ENCODE measurements at regions of chr12 and their contacts with region 1.

Region 1: GRCh38 chr12:123983822-123984485 is 10.9 kb downstream of the ZNF664 start:
- DNase-seq: peak; percentile 75
- ATAC-seq: peak; percentile 86
- H3K4me3 ChIP-seq: no peak overlapping the region
- H3K27ac ChIP-seq: no peak overlapping the region
- H3K4me1 ChIP-seq: no peaks in the 10 kb centered on the region; the same call in 1 of the 2 replicates
- H3K27me3 ChIP-seq: no peaks in the 10 kb centered on the region
- CTCF ChIP-seq: peak; percentile 81
- POLR2A ChIP-seq: no peak
- RAD21 ChIP-seq: peak; percentile 89

Region 2: DNA sequence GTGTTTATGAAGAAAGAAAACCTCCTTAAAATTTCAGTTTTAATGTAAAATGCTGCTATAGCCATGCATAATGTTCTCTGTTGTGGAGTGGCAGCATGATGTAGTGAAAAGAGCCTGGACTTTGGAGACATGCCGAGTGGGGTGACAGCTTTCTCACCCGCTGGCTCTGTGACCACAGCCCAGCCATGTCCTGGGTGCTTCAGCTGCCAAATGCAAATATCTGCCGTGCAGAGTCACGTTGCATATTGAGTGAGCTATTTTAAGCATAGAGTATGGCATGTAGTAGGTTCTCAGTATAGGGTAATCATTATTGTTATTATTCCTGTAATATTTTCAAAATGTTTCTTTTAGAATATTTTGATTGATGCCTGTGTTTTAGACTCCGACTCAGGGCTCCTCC is 328.5 kb before region 1 on chr12:
- CTCF ChIA-PET with region 1: no interaction called
- POLR2A ChIA-PET with region 1: no interaction called
- dilution Hi-C with region 1: no loop called
- in situ Hi-C with region 1: no loop called
- intact Hi-C with region 1: loop called (anchors 10 kb)
- DNase-seq: no peak
- ATAC-seq: no peak
- H3K4me3 ChIP-seq: no peak overlapping the region
- H3K27ac ChIP-seq: no peak overlapping the region
- H3K4me1 ChIP-seq: peaks cover 3% of the 10 kb centered on the region
- H3K27me3 ChIP-seq: no peaks in the 10 kb centered on the region
- CTCF ChIP-seq: no peak
- POLR2A ChIP-seq: no peak
- RAD21 ChIP-seq: no peak

Region 3: GRCh38 chr12:123713398-123713797 is 270.6 kb before region 1 on chr12:
- CTCF ChIA-PET with region 1: interaction called, 3 read pairs
- POLR2A ChIA-PET with region 1: interaction called, 4 read pairs
- dilution Hi-C with region 1: no loop called
- in situ Hi-C with region 1: no loop called
- intact Hi-C with region 1: loop called (anchors 5 kb)
- DNase-seq: peak; percentile 10
- ATAC-seq: no peak
- H3K4me3 ChIP-seq: peak overlapping the region; percentile 93
- H3K27ac ChIP-seq: no peak overlapping the region
- H3K4me1 ChIP-seq: peaks cover 5% of the 10 kb centered on the region
- H3K27me3 ChIP-seq: no peaks in the 10 kb centered on the region
- CTCF ChIP-seq: no peak
- POLR2A ChIP-seq: no peak
- RAD21 ChIP-seq: no peak

Region 4: GRCh38 chr12:123801573-123802178 is 182.3 kb before region 1 on chr12:
- CTCF ChIA-PET with region 1: no interaction called
- POLR2A ChIA-PET with region 1: no interaction called
- dilution Hi-C with region 1: no loop called
- in situ Hi-C with region 1: loop called (anchors 5 kb)
- intact Hi-C with region 1: loop called (anchors 1 kb)
- DNase-seq: peak; percentile 53
- ATAC-seq: no peak; the same call in 1 of the 2 replicates
- H3K4me3 ChIP-seq: no peak overlapping the region
- H3K27ac ChIP-seq: no peak overlapping the region
- H3K4me1 ChIP-seq: no peaks in the 10 kb centered on the region
- H3K27me3 ChIP-seq: peaks cover 12% of the 10 kb centered on the region
- CTCF ChIP-seq: peak; percentile 65
- POLR2A ChIP-seq: no peak
- RAD21 ChIP-seq: peak; percentile 66

Region 5: GRCh38 chr12:123808167-123808566 is 175.8 kb before region 1 on chr12:
- CTCF ChIA-PET with region 1: no interaction called
- POLR2A ChIA-PET with region 1: no interaction called
- dilution Hi-C with region 1: no loop called
- in situ Hi-C with region 1: loop called (anchors 5 kb)
- intact Hi-C with region 1: no loop called
- DNase-seq: peak; percentile 7
- ATAC-seq: no peak
- H3K4me3 ChIP-seq: no peak overlapping the region
- H3K27ac ChIP-seq: no peak overlapping the region
- H3K4me1 ChIP-seq: no peaks in the 10 kb centered on the region
- H3K27me3 ChIP-seq: peaks cover 8% of the 10 kb centered on the region; the same call in 1 of the 2 replicates
- CTCF ChIP-seq: peak; percentile 35
- POLR2A ChIP-seq: no peak
- RAD21 ChIP-seq: peak; percentile 30; the same call in 1 of the 2 replicates

Region 6: GRCh38 chr12:123891516-123892179 is 92.3 kb before region 1 on chr12:
- CTCF ChIA-PET with region 1: no interaction called
- POLR2A ChIA-PET with region 1: no interaction called
- dilution Hi-C with region 1: no loop called
- in situ Hi-C with region 1: no loop called
- intact Hi-C with region 1: no loop called
- DNase-seq: no peak
- ATAC-seq: no peak
- H3K4me3 ChIP-seq: no peak overlapping the region
- H3K27ac ChIP-seq: no peak overlapping the region
- H3K4me1 ChIP-seq: no peaks in the 10 kb centered on the region
- H3K27me3 ChIP-seq: peaks cover 41% of the 10 kb centered on the region
- CTCF ChIP-seq: no peak
- POLR2A ChIP-seq: no peak
- RAD21 ChIP-seq: no peak

Region 7: DNA sequence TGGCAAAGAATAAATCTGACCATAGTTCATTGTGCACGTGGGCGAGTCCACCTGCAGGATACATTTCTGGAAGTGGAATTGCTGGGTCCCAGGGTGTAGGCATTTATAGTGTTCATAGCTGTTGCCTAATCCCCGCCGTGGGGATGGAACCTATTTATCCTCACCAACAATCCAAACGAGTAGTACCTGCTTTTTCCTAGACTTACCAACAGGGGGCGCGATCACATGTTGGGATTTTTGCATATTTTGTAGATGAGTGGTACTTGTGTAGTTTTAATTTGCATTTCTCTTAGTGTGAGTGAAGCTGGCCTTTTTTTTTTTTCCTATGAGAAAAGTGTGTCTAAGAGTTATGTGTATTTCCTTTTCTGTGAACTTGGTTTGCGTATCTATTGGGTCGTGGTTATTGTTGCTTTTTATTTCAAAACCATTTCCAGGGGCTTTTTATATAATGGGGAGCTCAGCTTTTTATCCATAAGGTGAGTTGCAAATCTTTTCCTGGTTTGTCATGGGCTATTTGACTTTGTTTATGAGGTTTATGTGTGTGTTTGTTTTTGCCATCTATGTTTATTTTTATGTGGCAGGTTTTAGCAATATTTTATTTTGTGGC is 78.5 kb before region 1 on chr12:
- CTCF ChIA-PET with region 1: interaction called, 6 read pairs
- POLR2A ChIA-PET with region 1: no interaction called
- dilution Hi-C with region 1: no loop called
- in situ Hi-C with region 1: loop called (anchors 5 kb)
- intact Hi-C with region 1: loop called (anchors 5 kb)
- DNase-seq: peak; percentile 81
- ATAC-seq: peak; percentile 63
- H3K4me3 ChIP-seq: no peak overlapping the region
- H3K27ac ChIP-seq: no peak overlapping the region
- H3K4me1 ChIP-seq: peaks cover 8% of the 10 kb centered on the region
- H3K27me3 ChIP-seq: no peaks in the 10 kb centered on the region; the same call in 1 of the 2 replicates
- CTCF ChIP-seq: peak; percentile 78
- POLR2A ChIP-seq: no peak
- RAD21 ChIP-seq: peak; percentile 53

Region 8: GRCh38 chr12:124174451-124175348 is 190.7 kb after region 1 on chr12:
- CTCF ChIA-PET with region 1: no interaction called
- POLR2A ChIA-PET with region 1: no interaction called
- dilution Hi-C with region 1: no loop called
- in situ Hi-C with region 1: no loop called
- intact Hi-C with region 1: no loop called
- DNase-seq: no peak
- ATAC-seq: no peak
- H3K4me3 ChIP-seq: no peak overlapping the region
- H3K27ac ChIP-seq: no peak overlapping the region
- H3K4me1 ChIP-seq: no peaks in the 10 kb centered on the region
- H3K27me3 ChIP-seq: peaks cover 30% of the 10 kb centered on the region
- CTCF ChIP-seq: no peak
- POLR2A ChIP-seq: no peak
- RAD21 ChIP-seq: no peak